ENCODE measurements at regions of chr12 and their contacts with region 1.

Region 1: DNA sequence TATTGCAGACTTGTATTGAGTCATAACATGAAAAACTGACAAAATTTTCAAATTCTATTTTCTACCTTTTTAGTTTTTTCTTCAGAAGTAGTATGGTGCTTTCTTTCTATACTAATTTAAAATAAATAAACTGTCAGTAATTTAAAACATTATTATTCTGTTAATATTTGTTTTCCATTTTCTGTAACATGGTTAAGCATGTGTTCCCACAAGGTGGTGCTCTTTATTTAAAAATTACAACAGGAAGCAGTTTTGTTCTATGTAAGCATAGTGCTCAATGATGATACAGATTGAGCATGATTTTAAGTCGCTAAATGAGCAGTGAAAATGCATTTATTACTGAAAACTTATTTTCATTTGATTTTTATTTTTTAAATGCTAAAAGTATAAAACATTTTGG is 114.6 kb downstream of the PPFIA2 start:
- DNase-seq: peak; percentile 59

Region 2: GRCh38 chr12:81683881-81684280 is 39.4 kb after region 1 on chr12:
- in situ Hi-C with region 1: loop called (anchors 5 kb)
- DNase-seq: peak; percentile 60